Stomach (tissue), 19 donors: ENCODE measurements at regions of chr2 and their contacts with region 1.

Region 1: GRCh38 chr2:95215018-95215612 is 7.8 kb downstream of the ZNF892 start:
- DNase-seq: no peak
- H3K4me3 ChIP-seq: no peak overlapping the region
- H3K27ac ChIP-seq: no peak overlapping the region
- H3K4me1 ChIP-seq: no peaks in the 10 kb centered on the region
- H3K27me3 ChIP-seq: no peaks in the 10 kb centered on the region
- CTCF ChIP-seq: no peak
- EP300 ChIP-seq: no peak
- POLR2A ChIP-seq: no peak

Region 2: GRCh38 chr2:95121407-95122196 is 93.5 kb before region 1 on chr2 and contains the start of gene MRPS5:
- intact Hi-C with region 1: loop called (anchors 10 kb)
- DNase-seq: peak; percentile 89 to 94
- H3K4me3 ChIP-seq: peak within 1 kb of the TSS; percentile 74 to 98 (median 89)
- H3K27ac ChIP-seq: peak within 1 kb of the TSS; percentile 92 to 95 (median 94)
- H3K4me1 ChIP-seq: peaks cover 18 to 43% (median 37%) of the 10 kb centered on the region in 4 donors
- H3K27me3 ChIP-seq: no peaks in the 10 kb centered on the region
- CTCF ChIP-seq: no peak
- EP300 ChIP-seq: no peak
- POLR2A ChIP-seq: no peak
- total RNA-seq, gene MRPS5: 28.6 to 75.2 (median 43.7) TPM

Region 3: DNA sequence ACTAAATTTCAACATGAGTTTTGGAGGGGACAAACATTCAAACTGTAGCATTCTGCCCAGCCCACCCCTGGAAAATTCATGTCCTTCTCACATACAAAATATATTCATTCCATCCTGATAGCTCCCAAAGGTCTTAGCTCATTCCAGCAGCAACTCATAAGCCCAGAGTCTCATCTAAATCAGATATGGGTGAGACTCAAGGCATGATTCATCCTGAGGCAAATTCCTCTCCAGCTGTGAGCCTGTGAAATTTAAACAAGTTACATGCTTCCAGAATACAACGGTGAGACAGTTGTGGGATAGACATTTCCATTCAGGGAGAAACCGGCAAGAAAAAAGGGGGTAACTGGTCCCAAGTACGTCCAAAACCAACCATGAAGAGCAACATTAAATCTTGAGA is 143.9 kb after region 1 on chr2:
- intact Hi-C with region 1: no loop called
- DNase-seq: no peak
- H3K4me3 ChIP-seq: no peak overlapping the region
- H3K27ac ChIP-seq: no peak overlapping the region
- H3K4me1 ChIP-seq: no peaks in the 10 kb centered on the region
- H3K27me3 ChIP-seq: no peaks in the 10 kb centered on the region
- CTCF ChIP-seq: no peak
- EP300 ChIP-seq: no peak
- POLR2A ChIP-seq: no peak